MCF 10A (cell line): ENCODE measurements at regions of chr2 and their contacts with region 1.

Region 1: GRCh38 chr2:161754379-161754778 is 130.2 kb downstream of the SLC4A10 start:
- DNase-seq: no peak
- H3K4me3 Mint-ChIP-seq: no peak overlapping the region
- H3K27ac Mint-ChIP-seq: no peak overlapping the region
- H3K4me1 Mint-ChIP-seq: no peaks in the 10 kb centered on the region
- H3K27me3 Mint-ChIP-seq: peaks cover 12% of the 10 kb centered on the region
- CTCF ChIP-seq: no peak

Region 2: GRCh38 chr2:161631855-161632391 is 122.5 kb before region 1 on chr2:
- CTCF ChIA-PET with region 1: no interaction called
- POLR2A ChIA-PET with region 1: no interaction called
- intact Hi-C with region 1: loop called (anchors 10 kb)
- DNase-seq: no peak
- H3K4me3 Mint-ChIP-seq: no peak overlapping the region
- H3K27ac Mint-ChIP-seq: no peak overlapping the region
- H3K4me1 Mint-ChIP-seq: no peaks in the 10 kb centered on the region
- H3K27me3 Mint-ChIP-seq: peaks cover 33% of the 10 kb centered on the region
- CTCF ChIP-seq: no peak

Region 3: DNA sequence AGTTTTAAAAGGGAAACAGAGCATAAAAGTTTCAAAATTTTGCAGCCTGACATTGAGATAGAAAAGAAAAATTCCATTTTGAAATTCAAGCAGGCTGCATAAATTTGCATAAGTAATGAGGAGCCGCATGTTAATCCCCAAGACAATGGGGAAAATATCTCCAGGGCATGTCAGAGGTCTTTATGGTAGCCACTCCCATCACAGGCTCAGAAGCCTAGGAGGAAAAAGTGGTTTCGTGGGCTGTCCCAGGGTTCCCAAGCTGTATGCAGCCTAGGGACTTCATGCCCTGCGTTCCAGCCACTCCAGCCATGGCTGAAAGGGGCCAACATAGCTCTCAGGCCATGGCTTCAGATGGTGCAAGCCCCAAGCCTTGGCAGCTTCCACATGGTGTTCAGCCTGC is 21.4 kb before region 1 on chr2:
- CTCF ChIA-PET with region 1: no interaction called
- POLR2A ChIA-PET with region 1: no interaction called
- intact Hi-C with region 1: no loop called
- DNase-seq: no peak
- H3K4me3 Mint-ChIP-seq: no peak overlapping the region
- H3K27ac Mint-ChIP-seq: no peak overlapping the region
- H3K4me1 Mint-ChIP-seq: no peaks in the 10 kb centered on the region
- H3K27me3 Mint-ChIP-seq: peaks cover 21% of the 10 kb centered on the region
- CTCF ChIP-seq: no peak

Region 4: DNA sequence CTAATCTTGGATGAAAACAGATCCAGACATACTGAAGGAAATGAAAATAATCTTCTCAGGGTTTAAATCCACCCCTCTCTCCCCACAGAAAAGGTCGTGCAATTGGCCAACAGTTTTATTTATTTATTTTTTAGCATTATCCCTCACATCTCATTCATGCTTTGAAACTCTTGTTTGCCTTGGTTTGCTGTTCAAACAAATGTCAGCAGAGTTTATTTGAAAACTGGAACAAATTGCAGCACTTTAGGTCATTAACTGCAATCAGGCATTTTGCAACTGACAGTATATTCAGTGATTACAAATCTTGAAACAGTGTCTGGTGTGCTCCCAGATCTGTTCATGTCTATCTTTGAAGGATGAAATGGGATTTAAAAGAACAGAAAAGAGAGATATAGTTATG is 90.5 kb after region 1 on chr2:
- CTCF ChIA-PET with region 1: no interaction called
- POLR2A ChIA-PET with region 1: no interaction called
- intact Hi-C with region 1: no loop called
- DNase-seq: no peak
- H3K4me3 Mint-ChIP-seq: no peak overlapping the region
- H3K27ac Mint-ChIP-seq: no peak overlapping the region
- H3K4me1 Mint-ChIP-seq: no peaks in the 10 kb centered on the region
- H3K27me3 Mint-ChIP-seq: peaks cover 70% of the 10 kb centered on the region
- CTCF ChIP-seq: no peak